Caco-2 (cell line): ENCODE measurements at regions of chr3 and their contacts with region 1.

Region 1: GRCh38 chr3:76024640-76025039 is 239.3 kb upstream of the ZNF717 start:
- DNase-seq: peak in 1 of 2 experiments; percentile 19
- H3K4me3 ChIP-seq: no peak overlapping the region
- H3K4me3 Mint-ChIP-seq: no peak overlapping the region
- H3K27ac Mint-ChIP-seq: no peak overlapping the region
- H3K4me1 ChIP-seq: no peaks in the 10 kb centered on the region
- H3K4me1 Mint-ChIP-seq: no peaks in the 10 kb centered on the region
- H3K27me3 ChIP-seq: no peaks in the 10 kb centered on the region
- H3K27me3 Mint-ChIP-seq: no peaks in the 10 kb centered on the region
- CTCF ChIP-seq: peak; percentile 38 to 40

Region 2: GRCh38 chr3:76044601-76045600 is 20.3 kb after region 1 on chr3:
- CTCF ChIA-PET with region 1: no interaction called
- POLR2A ChIA-PET with region 1: no interaction called
- intact Hi-C with region 1: loop called (anchors 1 kb)
- DNase-seq: peak in 1 of 2 experiments; percentile 27
- H3K4me3 ChIP-seq: no peak overlapping the region
- H3K4me3 Mint-ChIP-seq: no peak overlapping the region
- H3K27ac Mint-ChIP-seq: no peak overlapping the region
- H3K4me1 ChIP-seq: peaks cover 7% of the 10 kb centered on the region; the same call in 1 of the 2 replicates
- H3K4me1 Mint-ChIP-seq: peaks cover 6% of the 10 kb centered on the region
- H3K27me3 ChIP-seq: no peaks in the 10 kb centered on the region
- H3K27me3 Mint-ChIP-seq: no peaks in the 10 kb centered on the region
- CTCF ChIP-seq: peak in 1 of 2 experiments; percentile 47

Region 3: DNA sequence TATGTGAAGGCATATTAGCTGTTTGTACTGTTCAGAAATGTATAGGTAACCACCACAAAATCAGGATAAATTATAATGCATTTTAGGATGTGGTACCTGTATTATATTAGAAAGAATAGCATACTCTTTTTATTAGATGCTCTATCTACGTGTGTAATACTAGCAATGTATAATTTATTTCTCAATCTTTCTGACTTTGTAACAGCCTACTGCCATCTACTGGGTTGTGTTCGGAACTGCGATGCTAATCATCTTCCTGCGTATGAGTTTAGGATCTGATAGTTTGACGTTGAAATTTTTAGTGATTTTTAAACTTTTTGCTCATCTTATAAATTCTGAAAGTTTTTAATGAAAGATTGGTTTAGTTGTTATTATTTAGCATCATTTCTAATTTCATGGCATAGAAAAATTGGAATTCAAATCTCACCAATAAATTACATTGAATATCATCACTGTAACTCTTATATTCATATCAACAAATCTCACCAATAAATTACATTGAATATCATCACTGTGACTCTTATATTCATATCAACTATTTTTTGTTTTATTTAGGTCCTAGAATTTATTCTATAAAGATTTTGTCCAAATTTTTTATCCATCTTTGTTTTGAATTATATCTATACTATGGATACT is 83.4 kb after region 1 on chr3:
- CTCF ChIA-PET with region 1: no interaction called
- POLR2A ChIA-PET with region 1: no interaction called
- intact Hi-C with region 1: loop called (anchors 1 kb)
- DNase-seq: peak in 1 of 2 experiments; percentile 21
- H3K4me3 ChIP-seq: no peak overlapping the region
- H3K4me3 Mint-ChIP-seq: no peak overlapping the region
- H3K27ac Mint-ChIP-seq: no peak overlapping the region
- H3K4me1 ChIP-seq: no peaks in the 10 kb centered on the region
- H3K4me1 Mint-ChIP-seq: no peaks in the 10 kb centered on the region
- H3K27me3 ChIP-seq: no peaks in the 10 kb centered on the region
- H3K27me3 Mint-ChIP-seq: no peaks in the 10 kb centered on the region
- CTCF ChIP-seq: peak; percentile 47 to 63

Region 4: GRCh38 chr3:76570436-76571057 is 545.9 kb after region 1 on chr3:
- CTCF ChIA-PET with region 1: no interaction called
- POLR2A ChIA-PET with region 1: no interaction called
- intact Hi-C with region 1: loop called (anchors 2 kb)
- DNase-seq: no peak
- H3K4me3 ChIP-seq: no peak overlapping the region
- H3K4me3 Mint-ChIP-seq: no peak overlapping the region
- H3K27ac Mint-ChIP-seq: no peak overlapping the region
- H3K4me1 ChIP-seq: no peaks in the 10 kb centered on the region
- H3K4me1 Mint-ChIP-seq: no peaks in the 10 kb centered on the region
- H3K27me3 ChIP-seq: no peaks in the 10 kb centered on the region
- H3K27me3 Mint-ChIP-seq: no peaks in the 10 kb centered on the region
- CTCF ChIP-seq: peak; percentile 54 to 61

Region 5: DNA sequence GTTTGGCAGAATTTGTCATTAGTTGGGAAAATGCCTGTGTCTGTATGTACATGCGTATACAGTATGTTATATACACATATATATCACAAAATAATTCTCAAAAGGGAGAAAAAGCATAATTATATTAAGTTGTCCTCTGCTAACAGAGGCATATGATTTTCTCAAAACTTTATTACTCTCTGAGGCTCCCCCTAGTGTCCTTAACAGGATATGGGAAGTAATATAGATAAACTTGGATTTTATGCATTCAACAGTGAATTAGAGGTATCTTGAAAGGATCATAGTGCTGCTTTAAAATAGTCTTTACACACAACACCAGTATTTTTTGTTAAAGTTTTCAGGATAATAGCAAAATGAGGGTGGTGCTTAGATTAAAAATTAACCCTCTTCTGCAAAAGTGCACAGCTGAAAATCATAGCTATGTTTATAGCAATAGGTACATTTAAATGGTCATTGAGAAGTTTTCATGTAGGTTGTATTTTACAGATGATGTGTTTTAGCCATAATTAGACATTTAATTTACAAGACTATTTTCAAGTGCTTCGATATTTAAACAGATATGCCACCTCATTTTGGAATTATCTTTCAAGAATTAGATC is 561.3 kb after region 1 on chr3:
- CTCF ChIA-PET with region 1: no interaction called
- POLR2A ChIA-PET with region 1: no interaction called
- intact Hi-C with region 1: loop called (anchors 5 kb)
- DNase-seq: peak in 1 of 2 experiments; percentile 14
- H3K4me3 ChIP-seq: no peak overlapping the region
- H3K4me3 Mint-ChIP-seq: no peak overlapping the region
- H3K27ac Mint-ChIP-seq: no peak overlapping the region
- H3K4me1 ChIP-seq: no peaks in the 10 kb centered on the region
- H3K4me1 Mint-ChIP-seq: no peaks in the 10 kb centered on the region
- H3K27me3 ChIP-seq: no peaks in the 10 kb centered on the region
- H3K27me3 Mint-ChIP-seq: peaks cover 3% of the 10 kb centered on the region
- CTCF ChIP-seq: peak; percentile 20 to 62